ENCODE measurements at regions of chr20 and their contacts with region 1.

Region 1: GRCh38 chr20:18276821-18277220 is 11.5 kb upstream of the ZNF133 start:
- DNase-seq: peak; percentile 80
- H3K4me3 ChIP-seq: no peak overlapping the region
- H3K27ac ChIP-seq: no peak overlapping the region
- H3K4me1 ChIP-seq: no peaks in the 10 kb centered on the region
- H3K27me3 ChIP-seq: no peaks in the 10 kb centered on the region
- CTCF ChIP-seq: peak; percentile 70

Region 2: DNA sequence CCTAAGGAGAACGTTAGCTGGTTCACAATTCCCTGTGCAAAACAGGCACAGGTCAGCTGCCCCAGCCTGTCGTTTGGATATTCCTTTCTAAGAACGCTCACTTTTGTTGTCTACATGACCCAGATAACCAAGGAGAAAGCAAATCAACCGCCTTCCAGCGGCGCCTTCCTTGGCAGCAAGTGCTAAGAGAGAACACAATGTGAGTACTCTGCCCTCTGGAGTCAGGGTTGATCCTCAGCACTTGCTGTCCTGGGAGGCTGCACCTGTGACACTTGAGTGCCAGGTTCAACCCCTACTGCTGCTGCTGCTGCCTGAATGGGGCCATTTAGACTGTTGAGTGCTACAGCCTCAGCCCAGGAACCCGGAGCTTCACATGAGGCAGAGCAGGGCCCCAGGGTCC is 255.9 kb before region 1 on chr20:
- intact Hi-C with region 1: loop called (anchors 10 kb)
- DNase-seq: no peak
- H3K4me3 ChIP-seq: no peak overlapping the region
- H3K27ac ChIP-seq: no peak overlapping the region
- H3K4me1 ChIP-seq: no peaks in the 10 kb centered on the region
- H3K27me3 ChIP-seq: no peaks in the 10 kb centered on the region
- CTCF ChIP-seq: no peak

Region 3: DNA sequence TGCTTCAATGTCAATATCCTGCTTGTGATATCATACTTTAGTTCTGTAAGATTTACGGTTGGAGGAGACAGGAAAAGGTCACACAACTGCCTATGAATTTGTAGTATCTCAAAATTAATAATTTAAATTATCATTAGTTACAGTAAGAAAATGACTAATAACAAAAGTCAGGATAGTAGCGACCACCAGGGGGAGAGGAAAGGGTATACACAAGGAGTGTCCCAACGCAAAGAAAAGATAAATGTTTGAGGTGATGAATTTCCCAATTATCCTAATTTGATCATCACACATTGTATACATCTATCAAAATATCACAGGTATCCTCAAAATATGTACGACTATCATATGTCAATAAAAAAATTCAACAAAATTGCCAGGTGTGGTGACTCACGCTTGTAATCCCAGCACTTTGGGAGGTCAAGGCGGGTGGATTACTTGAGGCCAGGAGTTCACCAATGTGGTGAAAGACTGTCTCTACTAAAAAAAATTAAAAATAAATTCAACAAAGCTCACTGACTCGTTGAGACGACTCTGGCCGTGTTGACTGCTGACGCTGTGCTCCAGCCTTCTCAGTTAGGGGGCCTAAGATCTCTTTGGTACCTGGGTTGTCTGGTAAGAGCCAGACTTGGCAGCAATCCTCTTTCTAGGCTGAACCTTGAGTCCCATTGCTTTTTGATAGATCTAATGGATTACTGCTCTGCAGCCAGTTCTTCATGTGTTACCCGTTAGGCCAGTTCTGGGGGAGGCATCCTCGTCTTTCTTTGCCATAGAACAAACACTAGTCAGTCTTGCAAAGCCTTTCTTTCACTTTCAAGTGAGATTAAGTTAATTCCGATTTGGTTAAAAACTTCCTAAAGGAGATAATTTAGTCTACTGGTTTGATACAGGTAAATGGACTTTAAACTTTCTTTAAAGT is 210.1 kb before region 1 on chr20:
- intact Hi-C with region 1: no loop called
- DNase-seq: no peak
- H3K4me3 ChIP-seq: no peak overlapping the region
- H3K27ac ChIP-seq: no peak overlapping the region
- H3K4me1 ChIP-seq: no peaks in the 10 kb centered on the region
- H3K27me3 ChIP-seq: peaks cover 4% of the 10 kb centered on the region
- CTCF ChIP-seq: no peak

Region 4: DNA sequence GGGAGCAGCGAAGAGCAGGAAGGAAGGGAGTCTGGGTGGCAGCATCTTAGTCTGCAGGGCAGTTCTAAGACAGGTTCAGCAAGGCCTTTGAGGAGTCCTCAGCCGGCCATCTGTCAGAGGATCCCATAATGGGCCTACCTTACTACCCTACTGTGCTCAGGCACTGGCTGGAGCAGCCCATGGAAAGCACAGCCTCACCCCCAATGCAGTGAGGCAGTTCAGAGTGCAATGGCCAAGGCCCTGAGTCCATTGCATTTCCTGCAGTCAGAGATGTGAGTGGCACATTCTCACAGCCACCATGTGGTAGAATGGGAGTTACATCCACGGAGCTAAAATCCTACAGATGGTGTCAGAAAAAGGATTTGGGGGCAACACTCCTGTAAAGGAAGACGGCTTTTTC is 199.7 kb before region 1 on chr20:
- intact Hi-C with region 1: no loop called
- DNase-seq: peak; percentile 34
- H3K4me3 ChIP-seq: no peak overlapping the region
- H3K27ac ChIP-seq: no peak overlapping the region
- H3K4me1 ChIP-seq: no peaks in the 10 kb centered on the region
- H3K27me3 ChIP-seq: no peaks in the 10 kb centered on the region
- CTCF ChIP-seq: no peak

Region 5: DNA sequence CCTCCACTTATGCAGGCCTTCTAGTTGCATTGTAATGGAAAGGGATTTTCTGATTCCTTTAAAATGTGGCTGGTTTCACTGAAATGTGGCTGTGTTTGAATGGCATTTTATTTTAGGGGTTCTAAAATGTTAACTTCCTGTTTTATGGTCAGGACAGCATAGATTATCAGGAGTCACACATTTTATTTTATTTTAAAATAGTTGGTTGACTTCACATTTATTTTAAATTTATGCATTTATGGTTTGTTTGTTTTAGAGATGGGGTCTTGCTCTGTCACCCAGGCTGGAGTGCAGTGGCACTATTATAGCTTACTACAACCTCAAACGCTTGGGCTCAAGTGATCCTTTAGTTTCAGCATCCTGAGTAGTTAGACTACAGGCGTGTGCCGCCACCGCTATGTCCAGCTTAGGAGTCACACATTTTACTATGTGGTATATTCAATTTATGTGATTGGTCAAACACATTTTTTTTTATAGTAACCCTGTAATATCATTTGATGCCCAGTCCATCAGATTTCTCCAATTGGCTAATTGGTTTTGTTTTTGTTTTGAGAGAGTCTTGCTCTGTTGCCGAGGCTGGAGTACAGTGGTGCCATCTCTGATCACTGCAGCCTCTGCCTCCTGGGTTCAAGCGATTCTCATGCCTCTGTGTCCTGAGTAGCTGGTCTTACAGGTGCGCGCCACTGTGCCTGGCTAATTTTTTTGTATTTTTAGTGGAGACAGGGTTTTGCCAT is 313.3 kb after region 1 on chr20:
- intact Hi-C with region 1: no loop called
- DNase-seq: no peak
- H3K4me3 ChIP-seq: no peak overlapping the region
- H3K27ac ChIP-seq: no peak overlapping the region
- H3K4me1 ChIP-seq: peaks cover 3% of the 10 kb centered on the region
- H3K27me3 ChIP-seq: no peaks in the 10 kb centered on the region
- CTCF ChIP-seq: no peak